PC-9 (cell line): ENCODE measurements at regions of chr7 and their contacts with region 1.

Region 1: DNA sequence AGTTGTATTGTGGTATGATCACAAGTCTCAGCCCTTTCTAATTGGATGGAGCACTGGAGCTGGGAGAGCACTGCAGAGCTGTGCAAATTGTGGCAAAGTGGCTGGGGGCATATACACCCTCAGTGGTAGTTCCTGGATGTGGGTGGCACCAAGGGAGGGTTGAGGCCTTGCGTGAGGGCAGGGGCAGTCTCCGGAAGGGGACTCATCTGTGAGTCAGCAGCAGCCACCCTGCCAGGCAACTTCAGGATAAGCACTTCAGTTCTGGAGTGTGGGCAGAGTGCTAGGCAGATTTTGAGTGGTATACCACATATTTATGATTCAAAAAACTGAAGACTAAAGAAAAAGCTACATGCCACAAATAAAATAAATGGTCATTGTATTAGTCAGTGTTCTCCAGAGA is 210.5 kb downstream of the ETV1 start:
- DNase-seq: peak in 1 of 2 experiments; percentile 45
- H3K4me3 ChIP-seq: no peak overlapping the region
- H3K27ac ChIP-seq: no peak overlapping the region
- H3K4me1 ChIP-seq: peaks cover 13% of the 10 kb centered on the region; the same call in 1 of the 2 replicates
- H3K27me3 ChIP-seq: no peaks in the 10 kb centered on the region
- CTCF ChIP-seq: no peak

Region 2: DNA sequence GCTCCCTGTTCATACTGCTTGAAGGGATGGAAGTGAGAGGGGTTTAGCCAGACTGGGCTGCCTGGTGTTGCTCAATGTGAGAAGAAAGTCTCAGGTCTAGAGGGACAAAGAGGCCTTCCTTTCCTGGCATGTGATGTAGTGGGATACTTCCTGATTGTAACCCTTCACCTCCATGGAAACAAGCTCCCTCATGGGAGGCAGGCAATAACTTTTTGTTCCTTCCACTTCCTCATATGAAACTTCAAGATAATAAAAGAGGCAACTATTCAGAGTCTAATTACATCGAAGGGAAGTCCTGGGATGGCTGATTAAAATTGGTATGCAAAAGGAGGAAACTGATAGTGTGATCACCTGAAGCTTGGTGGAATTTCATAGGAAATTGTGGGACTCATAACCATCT is 294.6 kb after region 1 on chr7:
- CTCF ChIA-PET with region 1: no interaction called
- POLR2A ChIA-PET with region 1: interaction called, 10 read pairs
- intact Hi-C with region 1: no loop called
- DNase-seq: no peak
- H3K4me3 ChIP-seq: no peak overlapping the region
- H3K27ac ChIP-seq: no peak overlapping the region
- H3K4me1 ChIP-seq: no peaks in the 10 kb centered on the region
- H3K27me3 ChIP-seq: no peaks in the 10 kb centered on the region
- CTCF ChIP-seq: no peak